Panc1 (cell line): ENCODE measurements at regions of chr2 and their contacts with region 1.

Region 1: DNA sequence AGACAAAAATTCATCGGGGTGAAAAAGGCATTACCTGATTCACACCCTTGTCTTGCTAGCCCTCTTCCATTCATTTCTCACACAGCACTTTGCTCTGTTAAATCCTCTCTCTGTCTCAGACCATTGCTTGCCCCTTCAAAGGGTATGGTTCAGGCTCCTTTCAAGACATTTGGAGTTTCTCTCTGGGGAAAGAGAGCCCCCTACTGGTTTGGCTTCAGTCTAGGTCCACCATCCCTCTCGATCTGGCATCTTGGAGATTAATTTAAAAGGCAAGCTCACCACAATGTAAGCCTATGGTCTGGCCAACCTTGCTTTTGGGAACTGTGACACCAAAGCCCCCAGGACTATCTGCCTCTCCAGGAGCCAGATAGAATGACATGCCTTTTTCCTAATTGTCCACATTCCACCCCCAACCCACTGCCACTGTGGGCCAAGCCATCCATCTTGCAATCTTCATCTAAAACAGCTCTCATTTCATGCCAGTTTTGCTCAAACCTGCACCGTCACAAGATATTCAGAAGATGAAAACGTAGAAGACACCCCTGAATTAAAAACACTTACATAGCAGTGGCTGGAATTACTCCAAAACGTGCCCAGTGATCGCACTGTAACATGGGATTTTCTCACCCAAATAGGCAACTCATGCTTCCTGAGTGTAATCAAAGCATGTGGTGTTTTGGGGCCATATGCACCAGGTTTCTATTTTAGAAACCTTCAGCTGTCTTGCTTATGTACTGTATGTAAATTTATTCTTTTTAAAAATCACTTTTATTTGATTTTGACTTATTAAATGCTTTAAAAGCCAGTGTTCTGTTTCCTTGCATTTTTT is 93.9 kb downstream of the FARSB start:
- DNase-seq: peak; percentile 43
- ATAC-seq: peak; percentile 85
- H3K4me3 ChIP-seq: no peak overlapping the region
- H3K27ac ChIP-seq: no peak overlapping the region
- H3K4me1 ChIP-seq: no peaks in the 10 kb centered on the region
- H3K27me3 ChIP-seq: no peaks in the 10 kb centered on the region
- CTCF ChIP-seq: peak; percentile 81

Region 2: GRCh38 chr2:221423210-221423786 is 1138.7 kb before region 1 on chr2:
- CTCF ChIA-PET with region 1: no interaction called
- POLR2A ChIA-PET with region 1: no interaction called
- in situ Hi-C with region 1: no loop called
- intact Hi-C with region 1: no loop called
- DNase-seq: no peak
- ATAC-seq: no peak
- H3K4me3 ChIP-seq: no peak overlapping the region
- H3K27ac ChIP-seq: no peak overlapping the region
- H3K4me1 ChIP-seq: no peaks in the 10 kb centered on the region
- H3K27me3 ChIP-seq: no peaks in the 10 kb centered on the region
- CTCF ChIP-seq: no peak

Region 3: DNA sequence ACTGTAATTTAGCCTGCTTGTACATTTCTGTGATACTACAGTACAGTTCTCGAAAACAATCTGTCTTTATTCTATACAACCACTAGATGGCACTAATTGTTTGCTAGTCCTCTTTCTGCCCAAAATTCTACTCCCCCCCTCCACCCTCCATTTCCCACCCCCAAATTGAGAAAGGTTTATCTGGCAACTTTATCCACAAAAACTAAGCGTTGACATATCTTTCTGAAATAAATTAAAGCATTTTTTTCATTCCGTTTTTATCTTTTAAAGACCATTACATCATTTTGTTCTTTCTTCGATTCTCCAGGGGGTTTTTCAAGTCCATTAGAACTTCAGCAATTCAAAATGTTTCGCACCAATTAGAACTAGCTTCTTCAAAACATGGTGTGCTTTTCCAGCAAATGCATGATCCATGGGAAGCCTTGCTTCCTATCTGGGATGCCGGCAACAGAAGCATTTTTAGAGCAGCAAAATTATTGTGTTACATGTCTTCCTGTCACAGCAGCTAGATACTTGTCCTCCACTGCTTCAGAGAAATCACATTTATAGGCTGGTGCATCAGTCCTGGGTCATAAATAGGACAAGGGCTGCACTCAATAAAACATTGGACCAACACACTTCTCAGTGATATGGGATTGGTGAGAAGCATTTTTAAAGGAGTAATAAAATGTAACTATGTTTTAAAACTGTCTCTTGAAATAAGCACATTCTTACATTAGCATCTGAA is 504.5 kb before region 1 on chr2:
- CTCF ChIA-PET with region 1: no interaction called
- POLR2A ChIA-PET with region 1: no interaction called
- in situ Hi-C with region 1: no loop called
- intact Hi-C with region 1: loop called (anchors 5 kb)
- DNase-seq: peak; percentile 7
- ATAC-seq: no peak
- H3K4me3 ChIP-seq: no peak overlapping the region
- H3K27ac ChIP-seq: no peak overlapping the region
- H3K4me1 ChIP-seq: no peaks in the 10 kb centered on the region
- H3K27me3 ChIP-seq: peaks cover 2% of the 10 kb centered on the region
- CTCF ChIP-seq: peak; percentile 69

Region 4: DNA sequence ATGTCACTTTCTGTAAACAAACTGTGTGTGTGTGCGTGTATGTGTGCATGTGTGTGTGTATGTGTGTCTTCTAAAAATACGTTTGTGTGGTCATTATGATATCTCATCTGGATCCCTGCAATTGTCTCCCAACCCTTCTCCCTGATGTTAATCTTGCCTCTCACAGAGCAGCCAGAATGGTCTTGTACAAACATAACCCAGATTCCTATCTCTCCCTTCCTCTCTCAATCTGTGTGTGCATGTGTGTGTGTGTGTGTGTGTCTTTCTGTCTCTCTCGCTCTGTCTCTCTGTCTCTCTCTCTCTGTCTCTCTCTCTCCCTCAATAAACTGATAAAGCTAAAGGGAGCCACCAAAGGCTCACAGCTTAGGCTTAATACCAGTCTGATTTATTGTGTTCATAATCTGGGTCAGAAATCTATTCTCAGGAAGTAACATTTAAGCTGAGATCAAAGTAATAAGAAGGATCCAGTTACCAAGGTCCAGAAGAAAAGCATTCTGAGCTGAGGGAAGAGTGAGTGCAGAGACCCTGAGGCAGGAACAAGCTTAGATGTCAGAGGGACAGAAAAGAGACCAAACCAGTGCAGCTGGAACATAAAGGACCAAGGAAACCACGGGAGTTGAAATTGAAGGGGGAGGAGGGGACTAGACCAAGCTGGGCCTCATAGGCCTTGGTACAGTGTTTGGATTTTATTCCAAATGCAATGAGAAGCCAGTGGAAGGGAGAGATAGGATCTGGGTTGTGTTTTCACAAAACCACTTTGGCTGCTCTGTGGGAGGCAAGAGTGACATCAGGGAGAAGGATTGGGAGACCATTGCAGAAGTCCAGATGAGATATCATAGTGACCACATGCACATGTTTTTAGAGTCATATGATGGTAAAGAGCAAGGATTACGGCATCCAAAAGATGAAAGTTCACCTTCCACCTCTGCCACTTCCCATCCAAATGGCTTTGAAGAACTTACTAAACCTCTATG is 473.8 kb before region 1 on chr2:
- CTCF ChIA-PET with region 1: interaction called, 12 read pairs
- POLR2A ChIA-PET with region 1: no interaction called
- in situ Hi-C with region 1: no loop called
- intact Hi-C with region 1: no loop called
- DNase-seq: no peak
- ATAC-seq: no peak
- H3K4me3 ChIP-seq: no peak overlapping the region
- H3K27ac ChIP-seq: no peak overlapping the region
- H3K4me1 ChIP-seq: no peaks in the 10 kb centered on the region
- H3K27me3 ChIP-seq: no peaks in the 10 kb centered on the region
- CTCF ChIP-seq: no peak

Region 5: DNA sequence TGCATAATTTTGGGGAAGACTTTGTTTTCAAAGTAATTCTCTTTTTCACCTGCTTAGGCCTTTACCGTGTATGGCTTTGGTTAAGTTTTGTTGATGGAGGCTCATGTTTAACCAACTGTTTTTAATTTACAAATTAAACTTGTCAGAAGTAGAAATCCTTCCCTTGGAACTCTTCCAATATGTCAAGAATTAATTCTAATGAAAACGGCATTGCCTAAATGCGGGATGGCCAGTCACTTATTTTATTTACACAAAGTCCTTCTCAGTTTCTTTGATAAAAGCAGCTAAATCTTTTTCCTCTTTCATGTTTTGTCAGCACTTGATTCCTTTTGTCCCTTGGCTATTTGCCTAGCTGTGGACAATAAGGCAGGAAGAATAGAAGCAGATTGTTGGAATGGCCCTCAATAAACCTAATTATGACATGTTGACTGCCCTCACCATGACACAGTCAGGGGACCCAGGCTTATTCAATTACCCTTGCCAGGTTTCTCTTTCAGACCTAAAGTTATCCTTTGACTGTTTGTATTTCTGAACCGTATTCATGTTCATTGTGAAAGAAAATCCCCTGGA is 289.5 kb before region 1 on chr2:
- CTCF ChIA-PET with region 1: no interaction called
- POLR2A ChIA-PET with region 1: no interaction called
- in situ Hi-C with region 1: no loop called
- intact Hi-C with region 1: no loop called
- DNase-seq: no peak
- ATAC-seq: no peak
- H3K4me3 ChIP-seq: no peak overlapping the region
- H3K27ac ChIP-seq: no peak overlapping the region
- H3K4me1 ChIP-seq: no peaks in the 10 kb centered on the region
- H3K27me3 ChIP-seq: peaks cover 9% of the 10 kb centered on the region; the same call in 1 of the 2 replicates
- CTCF ChIP-seq: no peak

Region 6: GRCh38 chr2:222318026-222318711 is 243.9 kb before region 1 on chr2:
- CTCF ChIA-PET with region 1: interaction called, 10 read pairs
- POLR2A ChIA-PET with region 1: no interaction called
- in situ Hi-C with region 1: no loop called
- intact Hi-C with region 1: loop called (anchors 2 kb)
- DNase-seq: peak; percentile 30
- ATAC-seq: peak; percentile 91
- H3K4me3 ChIP-seq: peak overlapping the region; percentile 46 to 52
- H3K27ac ChIP-seq: no peak overlapping the region
- H3K4me1 ChIP-seq: no peaks in the 10 kb centered on the region
- H3K27me3 ChIP-seq: peaks cover 42% of the 10 kb centered on the region
- CTCF ChIP-seq: peak; percentile 70

Region 7: GRCh38 chr2:222572751-222573174 is 10.7 kb after region 1 on chr2:
- CTCF ChIA-PET with region 1: no interaction called
- POLR2A ChIA-PET with region 1: no interaction called
- in situ Hi-C with region 1: no loop called
- intact Hi-C with region 1: no loop called
- DNase-seq: no peak
- ATAC-seq: no peak
- H3K4me3 ChIP-seq: no peak overlapping the region
- H3K27ac ChIP-seq: no peak overlapping the region
- H3K4me1 ChIP-seq: no peaks in the 10 kb centered on the region
- H3K27me3 ChIP-seq: no peaks in the 10 kb centered on the region
- CTCF ChIP-seq: no peak